Esophagus squamous epithelium (tissue), 5 donors: ENCODE measurements at regions of chr3 and their contacts with region 1.

Region 1: GRCh38 chr3:182713743-182714517 is 79.4 kb upstream of the ATP11B start:
- DNase-seq: no peak
- H3K4me3 ChIP-seq: no peak overlapping the region
- H3K27ac ChIP-seq: no peak overlapping the region
- H3K4me1 ChIP-seq: peaks cover 0 to 26% (median 0%) of the 10 kb centered on the region in 3 donors
- H3K27me3 ChIP-seq: no peaks in the 10 kb centered on the region
- CTCF ChIP-seq: peak; percentile 40 to 80 (median 58)
- POLR2A ChIP-seq: no peak

Region 2: DNA sequence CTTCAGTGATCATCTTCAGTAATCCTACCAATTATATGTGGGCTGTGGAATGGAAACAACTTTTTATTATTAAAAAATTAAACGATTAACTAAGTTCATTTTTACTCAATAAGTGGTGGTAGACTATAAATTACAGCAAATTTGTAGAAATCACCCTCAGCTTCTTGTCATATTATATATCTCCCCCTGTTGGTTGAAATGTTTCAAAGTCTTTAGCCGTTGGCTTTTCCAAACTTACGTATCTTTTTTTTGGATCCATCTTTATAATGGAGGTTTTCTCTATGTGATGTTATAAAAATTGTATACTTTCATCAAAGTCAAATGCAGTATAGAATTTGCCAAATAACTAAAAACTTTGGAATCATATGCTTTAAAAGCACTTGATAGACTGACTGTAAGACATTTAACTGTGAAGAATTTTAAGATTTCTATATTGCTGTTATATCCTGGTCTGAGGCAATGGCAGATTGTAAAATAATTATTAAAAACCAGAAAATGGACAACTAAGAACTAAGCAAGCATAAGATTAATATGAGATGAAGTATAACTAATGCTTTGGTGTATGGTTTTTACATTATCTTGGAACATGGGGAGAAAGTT is 124.0 kb after region 1 on chr3:
- intact Hi-C with region 1: loop called (anchors 10 kb)
- DNase-seq: no peak
- H3K4me3 ChIP-seq: no peak overlapping the region
- H3K27ac ChIP-seq: no peak overlapping the region
- H3K4me1 ChIP-seq: no peaks in the 10 kb centered on the region
- H3K27me3 ChIP-seq: no peaks in the 10 kb centered on the region
- CTCF ChIP-seq: peak in 4 of 6 experiments; percentile 16 to 52 (median 42)
- POLR2A ChIP-seq: no peak